ENCODE measurements at regions of chr1 and their contacts with region 1.

Region 1: DNA sequence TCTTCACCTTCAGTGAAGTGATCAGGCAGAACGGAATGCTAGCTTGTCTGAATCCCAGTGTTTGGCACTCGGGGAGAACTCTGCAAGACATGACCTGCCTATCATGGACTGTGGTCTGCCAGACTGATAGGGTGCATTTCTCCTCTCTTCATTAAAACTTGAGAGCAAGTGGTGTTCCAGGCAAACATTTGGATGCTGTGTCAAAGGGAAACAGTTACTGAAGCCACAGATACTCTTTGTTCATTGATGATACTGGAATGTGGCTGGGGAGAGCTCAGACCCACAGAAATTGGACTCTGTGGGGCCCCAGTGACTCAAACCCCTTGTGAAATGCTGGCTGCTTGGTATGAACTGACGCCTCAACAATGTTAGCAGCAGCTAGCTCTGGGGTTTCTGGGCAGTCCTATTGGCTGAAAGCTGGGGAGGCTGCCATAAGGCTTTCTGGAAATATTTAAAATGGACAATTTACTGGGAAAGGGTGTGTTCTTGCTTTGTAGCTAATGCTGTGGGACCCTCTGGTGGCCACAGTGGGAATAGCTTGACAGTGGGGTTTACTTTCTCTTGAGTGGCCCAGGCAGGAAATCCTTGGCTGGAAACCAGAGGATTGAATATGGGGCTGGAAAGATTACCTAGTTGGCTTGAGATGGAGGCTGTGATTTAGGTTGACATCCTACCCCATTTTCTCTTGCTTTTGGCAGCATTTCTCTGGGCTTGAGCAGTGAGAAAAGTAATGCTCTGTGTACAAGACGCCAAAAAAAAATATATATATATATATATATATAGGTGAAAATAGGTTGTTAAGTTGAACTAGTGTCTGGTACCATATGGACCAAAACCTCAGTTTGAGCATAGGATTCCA is 8.0 kb upstream of the S100A10 start:
- DNase-seq: peak; percentile 68 to 85 (median 72)
- ATAC-seq: peak; percentile 89
- H3K4me3 ChIP-seq: no peak overlapping the region
- H3K27ac ChIP-seq: no peak overlapping the region
- H3K4me1 ChIP-seq: no peaks in the 10 kb centered on the region
- H3K27me3 ChIP-seq: peaks cover 15% of the 10 kb centered on the region in 2 experiments; a peak in 3 of 5 replicates
- CTCF ChIP-seq: peak; percentile 84 to 93 (median 90)
- EP300 ChIP-seq: no peak
- POLR2A ChIP-seq: no peak
- RAD21 ChIP-seq: peak; percentile 89 to 94

Region 2: DNA sequence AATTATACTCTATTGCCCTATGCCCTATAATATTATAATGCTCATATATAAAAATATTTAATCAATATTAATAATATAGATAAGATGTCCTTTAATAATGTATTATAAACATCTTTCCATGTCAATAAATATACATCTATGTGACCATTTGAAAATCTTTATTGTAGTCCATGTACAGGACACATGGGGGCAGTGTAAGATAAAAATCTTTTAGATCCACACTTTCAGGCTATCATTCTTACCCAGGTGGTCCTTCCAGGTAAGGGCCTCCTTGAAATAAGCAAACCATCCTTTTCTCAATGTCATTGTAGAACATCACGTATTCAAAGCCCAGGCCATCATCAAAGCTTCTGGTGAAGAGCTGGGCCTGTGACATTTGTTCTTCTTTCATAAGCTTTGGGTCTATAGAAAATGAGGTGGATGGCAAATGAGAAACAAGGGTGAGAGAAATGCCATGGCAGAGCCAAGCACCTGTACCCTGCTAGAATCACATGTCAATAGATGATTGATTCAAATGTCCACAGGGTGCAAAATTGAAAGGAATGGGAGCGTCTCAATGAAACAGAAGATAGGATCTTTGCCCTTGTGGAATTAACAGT is 112.5 kb before region 1 on chr1:
- CTCF ChIA-PET with region 1: interaction called, 46 read pairs
- POLR2A ChIA-PET with region 1: no interaction called
- in situ Hi-C with region 1: no loop called
- intact Hi-C with region 1: loop called (anchors 1 kb)
- DNase-seq: no peak
- ATAC-seq: no peak; the same call in 2 of the 3 replicates
- H3K4me3 ChIP-seq: no peak overlapping the region
- H3K27ac ChIP-seq: no peak overlapping the region
- H3K4me1 ChIP-seq: peaks cover 0 to 10% of the 10 kb centered on the region in 2 experiments; a peak in 2 of 5 replicates
- H3K27me3 ChIP-seq: no peaks in the 10 kb centered on the region
- CTCF ChIP-seq: peak in 2 of 3 experiments; percentile 25 to 57; a peak in 2 of 6 replicates
- EP300 ChIP-seq: no peak
- POLR2A ChIP-seq: no peak
- RAD21 ChIP-seq: peak; percentile 56 to 64

Region 3: GRCh38 chr1:151968058-151968457 is 33.6 kb before region 1 on chr1:
- CTCF ChIA-PET with region 1: interaction called, 32 read pairs
- POLR2A ChIA-PET with region 1: interaction called, 3 read pairs
- in situ Hi-C with region 1: no loop called
- intact Hi-C with region 1: loop called (anchors 1 kb)
- DNase-seq: peak in 2 of 4 experiments; percentile 51 to 68
- ATAC-seq: peak; percentile 83
- H3K4me3 ChIP-seq: no peak overlapping the region
- H3K27ac ChIP-seq: no peak overlapping the region
- H3K4me1 ChIP-seq: peaks cover 0 to 9% of the 10 kb centered on the region in 2 experiments; a peak in 4 of 5 replicates
- H3K27me3 ChIP-seq: peaks cover 0 to 4% of the 10 kb centered on the region in 2 experiments; a peak in 2 of 5 replicates
- CTCF ChIP-seq: peak; percentile 81 to 94 (median 83)
- EP300 ChIP-seq: no peak
- POLR2A ChIP-seq: no peak
- RAD21 ChIP-seq: peak; percentile 87 to 95